H1 (cell line): ENCODE measurements at regions of chr21 and their contacts with region 1.

Region 1: DNA sequence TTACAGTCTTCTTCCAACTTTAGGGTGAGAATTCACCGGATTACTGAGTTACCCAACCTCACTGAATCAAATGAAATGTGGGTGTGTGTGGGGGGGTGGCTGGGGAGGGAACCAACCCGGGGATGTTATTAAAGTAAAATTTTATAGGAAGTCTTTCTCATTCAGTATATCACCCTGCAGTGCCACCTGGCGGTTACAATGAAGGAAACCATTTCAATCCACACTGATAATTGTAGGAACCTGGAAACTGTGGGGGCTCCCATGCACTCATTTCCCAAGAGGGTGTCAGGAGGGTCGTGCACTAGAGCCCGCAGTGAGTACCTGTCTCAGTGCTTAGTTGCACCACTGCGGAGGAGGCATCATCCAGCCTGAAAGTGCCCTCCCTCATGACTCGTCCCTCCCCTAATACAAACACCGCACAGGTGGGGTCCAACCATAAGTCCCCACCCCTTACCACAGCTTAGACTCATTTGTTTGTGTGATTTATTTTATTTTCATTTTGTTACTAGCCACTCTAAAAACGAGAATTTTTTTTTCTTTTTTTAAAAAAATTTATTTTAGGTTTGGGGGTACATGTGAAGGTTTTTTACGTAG is 29.1 kb upstream of the IGSF5 start:
- DNase-seq: peak in 1 of 2 experiments; percentile 73
- H3K4me3 ChIP-seq: no peak overlapping the region
- H3K27ac ChIP-seq: no peak overlapping the region
- H3K4me1 ChIP-seq: peaks cover 0 to 4% (median 1%) of the 10 kb centered on the region in 4 experiments; a peak in 1 of 7 replicates
- H3K27me3 ChIP-seq: no peaks in the 10 kb centered on the region
- CTCF ChIP-seq: peak in 2 of 3 experiments; percentile 50 to 55; a peak in 3 of 4 replicates
- EP300 ChIP-seq: no peak
- POLR2A ChIP-seq: no peak
- RAD21 ChIP-seq: peak; percentile 70 to 79

Region 2: GRCh38 chr21:39518138-39518846 is 197.6 kb before region 1 on chr21:
- CTCF ChIA-PET with region 1: interaction called, 62 read pairs
- POLR2A ChIA-PET with region 1: no interaction called
- DNase-seq: peak; percentile 43 to 60
- H3K4me3 ChIP-seq: no peak overlapping the region
- H3K27ac ChIP-seq: no peak overlapping the region
- H3K4me1 ChIP-seq: peaks cover 0 to 5% (median 0%) of the 10 kb centered on the region in 4 experiments; a peak in 2 of 7 replicates
- H3K27me3 ChIP-seq: no peaks in the 10 kb centered on the region
- CTCF ChIP-seq: peak; percentile 65 to 99 (median 91)
- EP300 ChIP-seq: no peak
- POLR2A ChIP-seq: no peak
- RAD21 ChIP-seq: peak; percentile 100

Region 3: DNA sequence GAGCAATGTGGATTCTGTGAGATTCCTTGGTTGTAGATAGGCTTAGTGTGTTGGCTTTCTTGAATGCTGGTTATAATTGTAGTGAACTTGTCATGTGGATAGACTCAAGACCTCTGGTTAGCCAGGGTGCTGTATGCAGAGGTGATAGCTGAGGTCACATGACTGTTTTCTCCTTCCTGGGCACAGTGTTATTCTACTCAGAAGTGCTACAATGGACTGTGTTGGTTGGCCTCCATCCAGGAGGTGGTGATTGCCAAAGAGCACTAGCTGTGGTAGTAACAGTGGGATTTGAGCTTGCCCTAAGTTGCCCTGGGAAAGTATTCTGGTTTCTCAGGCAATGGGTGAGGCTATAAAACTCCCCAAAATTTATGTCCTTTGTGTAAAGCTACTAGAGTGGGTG is 192.5 kb before region 1 on chr21:
- CTCF ChIA-PET with region 1: interaction called, 62 read pairs
- POLR2A ChIA-PET with region 1: no interaction called
- DNase-seq: no peak
- H3K4me3 ChIP-seq: no peak overlapping the region
- H3K27ac ChIP-seq: no peak overlapping the region
- H3K4me1 ChIP-seq: no peaks in the 10 kb centered on the region; a peak in 1 of 7 replicates
- H3K27me3 ChIP-seq: no peaks in the 10 kb centered on the region; a peak in 1 of 7 replicates
- CTCF ChIP-seq: no peak
- EP300 ChIP-seq: no peak
- POLR2A ChIP-seq: no peak
- RAD21 ChIP-seq: no peak

Region 4: DNA sequence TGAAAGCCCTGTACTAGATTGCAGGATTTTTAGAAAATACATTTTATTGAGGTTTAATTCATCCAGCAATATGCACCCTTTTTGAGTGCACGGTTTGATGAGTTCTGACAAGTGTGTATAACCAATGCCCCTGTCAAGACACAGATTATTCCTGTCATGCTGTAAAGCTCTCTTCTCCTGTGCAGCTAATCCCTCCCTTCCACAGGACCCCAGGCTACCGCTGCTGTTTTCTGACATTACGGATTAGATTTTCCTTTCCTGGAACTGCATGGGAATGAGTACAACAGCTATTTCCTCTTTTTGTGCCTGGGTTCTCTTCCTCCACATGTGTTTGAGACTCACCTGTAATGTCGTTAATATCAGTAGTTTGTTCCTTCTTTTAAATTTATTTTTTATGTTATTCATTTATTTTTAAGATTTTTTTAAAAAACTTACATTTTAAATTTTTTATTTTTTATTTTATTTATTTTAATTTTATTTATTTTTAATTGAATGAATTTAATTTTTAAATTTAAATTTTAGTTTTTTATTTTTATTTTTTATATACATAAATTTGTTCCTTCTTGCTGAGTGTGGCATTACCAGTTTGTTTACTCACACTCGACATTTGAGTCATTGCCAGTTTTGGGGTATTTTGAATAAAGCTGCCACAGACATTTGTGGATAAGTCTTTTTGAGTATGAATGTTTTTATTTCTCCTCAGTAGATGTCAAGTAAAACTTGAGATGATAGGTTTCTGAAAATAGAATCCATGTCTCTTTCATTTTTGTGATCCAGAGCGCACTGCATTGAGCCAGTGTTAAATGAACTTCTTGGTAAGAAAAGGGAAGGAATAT is 182.1 kb before region 1 on chr21:
- CTCF ChIA-PET with region 1: interaction called, 11 read pairs
- POLR2A ChIA-PET with region 1: no interaction called
- DNase-seq: no peak
- H3K4me3 ChIP-seq: no peak overlapping the region
- H3K27ac ChIP-seq: no peak overlapping the region
- H3K4me1 ChIP-seq: peaks cover 2 to 18% (median 8%) of the 10 kb centered on the region in 4 experiments; a peak in 6 of 7 replicates
- H3K27me3 ChIP-seq: no peaks in the 10 kb centered on the region
- CTCF ChIP-seq: no peak
- EP300 ChIP-seq: no peak
- POLR2A ChIP-seq: no peak
- RAD21 ChIP-seq: no peak

Region 5: GRCh38 chr21:39705849-39706248 is 10.1 kb before region 1 on chr21:
- CTCF ChIA-PET with region 1: interaction called, 24 read pairs
- POLR2A ChIA-PET with region 1: no interaction called
- DNase-seq: no peak
- H3K4me3 ChIP-seq: no peak overlapping the region
- H3K27ac ChIP-seq: no peak overlapping the region
- H3K4me1 ChIP-seq: peaks cover 3 to 12% (median 9%) of the 10 kb centered on the region in 4 experiments
- H3K27me3 ChIP-seq: no peaks in the 10 kb centered on the region
- CTCF ChIP-seq: no peak
- EP300 ChIP-seq: no peak
- POLR2A ChIP-seq: no peak
- RAD21 ChIP-seq: no peak

Region 6: GRCh38 chr21:39726132-39726727 is 10.3 kb after region 1 on chr21:
- CTCF ChIA-PET with region 1: interaction called, 56 read pairs
- POLR2A ChIA-PET with region 1: no interaction called
- DNase-seq: no peak
- H3K4me3 ChIP-seq: no peak overlapping the region
- H3K27ac ChIP-seq: no peak overlapping the region
- H3K4me1 ChIP-seq: 0 out of 7 replicates have a peak, but pooled peaks cover 0 to 3% (median 0%) of the 10 kb centered on the region in 4 experiments
- H3K27me3 ChIP-seq: no peaks in the 10 kb centered on the region
- CTCF ChIP-seq: peak in 2 of 3 experiments; percentile 1 to 5; a peak in 2 of 4 replicates
- EP300 ChIP-seq: no peak
- POLR2A ChIP-seq: no peak
- RAD21 ChIP-seq: peak in 1 of 2 experiments; percentile 17; a peak in 2 of 4 replicates

Region 7: GRCh38 chr21:39763255-39763945 is 47.5 kb after region 1 on chr21:
- CTCF ChIA-PET with region 1: no interaction called
- POLR2A ChIA-PET with region 1: no interaction called
- DNase-seq: no peak
- H3K4me3 ChIP-seq: no peak overlapping the region
- H3K27ac ChIP-seq: no peak overlapping the region
- H3K4me1 ChIP-seq: no peaks in the 10 kb centered on the region
- H3K27me3 ChIP-seq: no peaks in the 10 kb centered on the region
- CTCF ChIP-seq: no peak
- EP300 ChIP-seq: no peak
- POLR2A ChIP-seq: no peak
- RAD21 ChIP-seq: no peak